AG04449 (cell line): ENCODE measurements at regions of chr9 and their contacts with region 1.

Region 1: GRCh38 chr9:123401879-123402513 is 46.0 kb downstream of the CRB2 start:
- DNase-seq: no peak
- H3K4me3 ChIP-seq: no peak overlapping the region
- CTCF ChIP-seq: peak; percentile 79

Region 2: DNA sequence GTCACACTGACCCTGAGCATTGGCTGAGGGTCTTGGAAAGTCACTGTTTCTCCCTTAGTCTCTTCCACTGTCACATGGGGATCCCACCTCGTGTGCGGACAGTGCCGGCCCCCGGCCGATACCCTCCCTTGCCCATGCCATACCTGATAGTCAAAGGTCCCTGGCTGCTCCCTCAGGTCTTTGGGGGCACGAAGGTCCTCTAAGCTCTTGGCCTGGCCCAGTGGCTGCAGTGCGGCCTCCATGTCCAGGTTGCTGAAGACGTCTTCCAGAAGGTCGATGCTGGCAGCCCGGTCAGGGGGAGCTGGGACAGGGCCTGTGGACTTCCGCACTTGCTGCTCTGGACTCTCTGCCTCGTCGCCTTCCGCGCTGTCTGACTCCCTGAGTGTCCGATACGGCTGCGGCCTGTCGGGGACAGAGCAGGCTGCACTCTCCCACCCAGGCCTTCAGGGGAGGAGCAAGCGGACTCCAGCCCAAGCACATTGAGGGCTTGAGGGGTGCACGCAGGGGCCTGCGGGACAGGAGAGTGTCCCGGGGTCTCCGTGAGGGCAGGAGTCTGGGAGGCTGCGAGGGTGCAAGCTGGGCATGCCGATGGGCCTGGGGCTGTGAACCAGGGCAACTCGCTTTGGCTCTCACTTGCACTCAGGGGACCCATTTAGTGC is 18.4 kb before region 1 on chr9:
- CTCF ChIA-PET with region 1: interaction called, 11 read pairs
- POLR2A ChIA-PET with region 1: no interaction called
- DNase-seq: no peak
- H3K4me3 ChIP-seq: no peak overlapping the region
- CTCF ChIP-seq: no peak

Region 3: DNA sequence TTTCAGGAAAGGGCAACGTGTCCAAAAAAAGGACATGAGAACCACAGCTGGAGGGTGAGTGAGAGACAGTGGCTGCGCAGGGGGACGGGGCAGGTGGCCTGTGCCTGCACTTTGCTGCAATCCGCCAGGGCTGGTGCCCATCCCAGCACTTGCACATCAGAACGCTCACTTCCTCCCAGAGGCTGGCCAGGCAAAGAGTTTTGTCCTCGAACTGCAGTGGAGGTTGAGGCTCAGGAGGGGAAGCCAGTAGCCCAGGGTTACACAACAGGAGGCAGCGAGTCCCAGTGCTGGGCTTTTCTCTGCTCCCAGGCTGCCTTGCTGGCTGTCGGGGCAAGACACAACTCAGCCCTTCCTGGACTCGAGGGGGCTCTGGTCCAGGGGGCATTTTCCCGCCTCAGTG is 12.9 kb before region 1 on chr9:
- CTCF ChIA-PET with region 1: interaction called, 11 read pairs
- POLR2A ChIA-PET with region 1: no interaction called
- DNase-seq: no peak
- H3K4me3 ChIP-seq: no peak overlapping the region
- CTCF ChIP-seq: no peak

Region 4: GRCh38 chr9:123697686-123698085 is 295.7 kb after region 1 on chr9:
- CTCF ChIA-PET with region 1: no interaction called
- POLR2A ChIA-PET with region 1: no interaction called
- DNase-seq: no peak
- H3K4me3 ChIP-seq: no peak overlapping the region
- CTCF ChIP-seq: no peak